Activated B cell treated with CpG ODN at 0.5 μM for 24 hours (primary cell): ENCODE measurements at regions of chr6 and their contacts with region 1.

Region 1: GRCh38 chr6:10542213-10542612 is 21.1 kb downstream of the GCNT2 start:
- DNase-seq: no peak
- ATAC-seq: no peak
- H3K4me3 Mint-ChIP-seq: no peak overlapping the region
- H3K27ac Mint-ChIP-seq: no peak overlapping the region
- H3K4me1 Mint-ChIP-seq: peaks cover 65% of the 10 kb centered on the region
- H3K27me3 Mint-ChIP-seq: no peaks in the 10 kb centered on the region
- CTCF ChIP-seq: no peak

Region 2: GRCh38 chr6:10528170-10528981 is 13.8 kb before region 1 on chr6:
- CTCF ChIA-PET with region 1: no interaction called
- POLR2A ChIA-PET with region 1: interaction called, 10 read pairs
- intact Hi-C with region 1: loop called (anchors 1 kb)
- DNase-seq: no peak
- ATAC-seq: peak; percentile 57
- H3K4me3 Mint-ChIP-seq: peak overlapping the region; percentile 97
- H3K27ac Mint-ChIP-seq: peak overlapping the region; percentile 96
- H3K4me1 Mint-ChIP-seq: peaks cover 65% of the 10 kb centered on the region
- H3K27me3 Mint-ChIP-seq: no peaks in the 10 kb centered on the region
- CTCF ChIP-seq: no peak

Region 3: GRCh38 chr6:10555625-10556309 is 13.6 kb after region 1 on chr6:
- CTCF ChIA-PET with region 1: no interaction called
- POLR2A ChIA-PET with region 1: no interaction called
- intact Hi-C with region 1: loop called (anchors 2 kb)
- DNase-seq: no peak
- ATAC-seq: no peak
- H3K4me3 Mint-ChIP-seq: no peak overlapping the region
- H3K27ac Mint-ChIP-seq: no peak overlapping the region
- H3K4me1 Mint-ChIP-seq: peaks cover 50% of the 10 kb centered on the region
- H3K27me3 Mint-ChIP-seq: no peaks in the 10 kb centered on the region
- CTCF ChIP-seq: no peak

Region 4: GRCh38 chr6:10595731-10596664 is 53.8 kb after region 1 on chr6:
- CTCF ChIA-PET with region 1: no interaction called
- POLR2A ChIA-PET with region 1: no interaction called
- intact Hi-C with region 1: loop called (anchors 5 kb)
- DNase-seq: no peak
- ATAC-seq: no peak
- H3K4me3 Mint-ChIP-seq: no peak overlapping the region
- H3K27ac Mint-ChIP-seq: peak overlapping the region; percentile 70
- H3K4me1 Mint-ChIP-seq: peaks cover 59% of the 10 kb centered on the region
- H3K27me3 Mint-ChIP-seq: no peaks in the 10 kb centered on the region
- CTCF ChIP-seq: no peak